ENCODE measurements at regions of chr17 and their contacts with region 1.

Region 1: DNA sequence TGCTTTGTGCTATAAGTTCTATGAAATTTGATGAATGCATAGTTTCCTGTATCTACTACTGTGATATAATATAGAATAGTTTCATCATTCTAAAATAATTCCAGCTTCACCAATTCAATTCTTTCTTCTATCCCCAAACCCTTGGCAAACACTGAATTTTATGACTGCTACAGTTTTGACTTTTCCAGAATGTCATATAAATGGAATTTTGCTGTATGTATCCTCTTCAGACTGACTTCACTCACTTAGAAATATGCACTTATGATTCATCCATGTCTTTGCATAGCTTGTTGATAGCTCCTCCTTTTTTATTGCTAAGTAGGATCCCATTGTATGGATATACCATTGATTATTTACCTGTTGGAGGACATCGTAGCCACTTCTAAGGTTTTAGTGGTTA is 89.1 kb upstream of the HS3ST3A1 start:
- DNase-seq: no peak
- ATAC-seq: no peak
- H3K4me3 ChIP-seq: no peak overlapping the region
- H3K27ac ChIP-seq: no peak overlapping the region
- H3K4me1 ChIP-seq: no peaks in the 10 kb centered on the region
- H3K27me3 ChIP-seq: no peaks in the 10 kb centered on the region
- CTCF ChIP-seq: no peak
- EP300 ChIP-seq: no peak
- POLR2A ChIP-seq: no peak
- RAD21 ChIP-seq: no peak

Region 2: GRCh38 chr17:13484020-13484419 is 206.8 kb before region 1 on chr17:
- CTCF ChIA-PET with region 1: no interaction called
- POLR2A ChIA-PET with region 1: no interaction called
- RAD21 ChIA-PET with region 1: no interaction called
- SMC1A ChIA-PET with region 1: no interaction called
- in situ Hi-C with region 1: no loop called
- intact Hi-C with region 1: no loop called
- DNase-seq: no peak
- ATAC-seq: no peak
- H3K4me3 ChIP-seq: no peak overlapping the region
- H3K27ac ChIP-seq: no peak overlapping the region
- H3K4me1 ChIP-seq: no peaks in the 10 kb centered on the region
- H3K27me3 ChIP-seq: no peaks in the 10 kb centered on the region
- CTCF ChIP-seq: no peak
- EP300 ChIP-seq: no peak
- POLR2A ChIP-seq: no peak
- RAD21 ChIP-seq: no peak

Region 3: GRCh38 chr17:13609936-13610335 is 80.9 kb before region 1 on chr17:
- CTCF ChIA-PET with region 1: no interaction called
- POLR2A ChIA-PET with region 1: no interaction called
- RAD21 ChIA-PET with region 1: no interaction called
- SMC1A ChIA-PET with region 1: no interaction called
- in situ Hi-C with region 1: no loop called
- intact Hi-C with region 1: no loop called
- DNase-seq: no peak
- ATAC-seq: no peak
- H3K4me3 ChIP-seq: no peak overlapping the region
- H3K27ac ChIP-seq: no peak overlapping the region
- H3K4me1 ChIP-seq: no peaks in the 10 kb centered on the region
- H3K27me3 ChIP-seq: no peaks in the 10 kb centered on the region
- CTCF ChIP-seq: no peak
- EP300 ChIP-seq: no peak
- POLR2A ChIP-seq: no peak
- RAD21 ChIP-seq: no peak

Region 4: GRCh38 chr17:13642188-13642587 is 48.6 kb before region 1 on chr17:
- CTCF ChIA-PET with region 1: no interaction called
- POLR2A ChIA-PET with region 1: no interaction called
- RAD21 ChIA-PET with region 1: no interaction called
- SMC1A ChIA-PET with region 1: no interaction called
- in situ Hi-C with region 1: loop called (anchors 5 kb)
- intact Hi-C with region 1: no loop called
- DNase-seq: no peak
- ATAC-seq: no peak
- H3K4me3 ChIP-seq: no peak overlapping the region
- H3K27ac ChIP-seq: no peak overlapping the region
- H3K4me1 ChIP-seq: no peaks in the 10 kb centered on the region
- H3K27me3 ChIP-seq: no peaks in the 10 kb centered on the region
- CTCF ChIP-seq: no peak
- EP300 ChIP-seq: no peak
- POLR2A ChIP-seq: no peak
- RAD21 ChIP-seq: no peak

Measured in GM12878 (cell line).